PC-9 (cell line): ENCODE measurements at regions of chr15 and their contacts with region 1.

Region 1: GRCh38 chr15:55434989-55435825 is 26.9 kb downstream of the PIERCE2 start:
- DNase-seq: peak; percentile 5 to 37
- H3K4me3 ChIP-seq: no peak overlapping the region
- H3K27ac ChIP-seq: no peak overlapping the region
- H3K4me1 ChIP-seq: no peaks in the 10 kb centered on the region
- H3K27me3 ChIP-seq: no peaks in the 10 kb centered on the region
- CTCF ChIP-seq: peak; percentile 65

Region 2: DNA sequence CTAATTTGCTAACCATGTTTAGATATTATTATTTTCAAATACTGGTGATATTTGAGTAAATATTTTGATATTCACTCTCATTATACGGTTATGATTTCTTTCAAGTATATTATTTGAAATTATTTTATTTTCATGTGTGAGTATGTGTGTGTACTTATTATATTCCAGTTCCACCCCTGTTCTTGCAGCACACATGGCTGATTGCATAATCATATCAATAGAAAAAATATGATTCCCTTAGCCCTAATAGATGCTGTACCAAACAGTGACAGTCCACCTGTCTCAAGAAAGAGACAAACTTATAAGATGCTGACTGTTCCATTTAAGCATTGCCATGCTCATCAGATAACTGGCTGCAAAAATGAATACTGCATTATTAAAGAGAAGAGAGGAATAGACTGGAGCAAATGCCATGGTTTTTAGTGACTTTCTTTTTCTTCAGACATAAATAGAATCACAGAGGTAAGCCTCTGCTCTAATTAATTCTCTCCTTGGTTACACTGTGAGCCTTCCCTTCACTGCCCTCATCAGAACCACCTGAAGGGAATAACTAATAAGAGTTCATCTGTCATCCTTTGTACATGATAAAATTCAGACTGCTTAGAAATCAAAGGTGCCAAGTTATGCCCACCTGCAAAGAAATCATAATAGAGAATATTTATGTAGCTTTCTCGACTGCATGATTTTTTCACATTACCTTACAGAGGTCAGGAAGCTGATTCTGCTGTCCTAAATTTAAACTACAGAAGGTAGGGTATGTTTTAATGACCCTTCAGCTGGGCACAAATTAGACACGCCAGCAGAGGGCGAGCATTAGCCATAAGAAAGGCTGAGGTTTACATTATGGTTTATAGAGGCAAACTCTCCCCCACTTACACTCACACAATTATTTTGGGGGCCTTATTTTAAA is 1472.6 kb before region 1 on chr15:
- CTCF ChIA-PET with region 1: no interaction called
- POLR2A ChIA-PET with region 1: no interaction called
- intact Hi-C with region 1: loop called (anchors 10 kb)
- DNase-seq: peak in 1 of 2 experiments; percentile 7
- H3K4me3 ChIP-seq: no peak overlapping the region
- H3K27ac ChIP-seq: no peak overlapping the region
- H3K4me1 ChIP-seq: no peaks in the 10 kb centered on the region
- H3K27me3 ChIP-seq: no peaks in the 10 kb centered on the region
- CTCF ChIP-seq: peak; percentile 63

Region 3: DNA sequence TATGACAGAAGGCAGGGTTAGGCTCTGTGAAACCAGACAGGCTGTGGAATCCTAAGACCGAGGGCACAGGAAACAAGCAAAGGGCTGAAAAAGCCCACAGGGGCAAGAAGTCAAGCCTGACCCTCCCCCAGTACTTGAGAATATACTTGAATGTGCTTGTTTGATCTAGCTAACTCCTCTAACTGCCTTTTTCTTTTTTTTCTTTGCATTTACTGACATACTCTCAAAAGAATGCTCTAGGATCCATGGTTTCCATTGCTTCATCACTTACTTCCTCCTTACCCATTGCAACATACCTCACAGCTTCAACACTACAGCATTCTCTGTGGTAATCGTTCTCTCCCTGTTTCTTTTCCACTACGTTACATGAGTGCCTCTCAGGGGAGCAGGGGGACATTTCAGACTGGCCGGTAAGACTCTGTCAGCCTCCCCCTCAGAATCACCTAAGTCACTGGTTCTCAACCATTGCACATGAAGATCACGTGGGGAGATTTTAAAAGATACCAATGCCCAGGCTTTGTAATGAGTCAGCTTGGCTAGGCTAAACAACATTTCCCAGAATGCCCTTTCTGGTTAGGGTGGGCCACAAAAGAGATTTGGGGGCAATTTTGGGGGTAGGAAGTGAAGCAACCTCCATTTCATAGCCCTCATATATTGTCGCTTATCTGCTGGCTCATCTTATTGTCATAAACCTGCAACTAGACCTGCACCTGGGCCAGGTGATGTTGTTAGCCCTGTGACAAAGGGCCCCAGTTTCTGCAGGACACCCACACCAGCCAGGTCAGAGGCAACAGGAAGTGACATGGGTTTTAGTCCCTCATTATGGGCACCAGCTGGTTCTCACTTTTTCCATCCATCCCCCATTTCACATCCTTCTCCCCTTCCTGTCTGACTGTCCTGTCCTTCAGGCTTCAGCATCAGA is 213.9 kb before region 1 on chr15:
- CTCF ChIA-PET with region 1: interaction called, 4 read pairs
- POLR2A ChIA-PET with region 1: interaction called, 10 read pairs
- intact Hi-C with region 1: loop called (anchors 1 kb)
- DNase-seq: peak; percentile 33 to 92
- H3K4me3 ChIP-seq: peak overlapping the region; percentile 31; the same call in 1 of the 2 replicates
- H3K27ac ChIP-seq: peak overlapping the region; percentile 84
- H3K4me1 ChIP-seq: peaks cover 23% of the 10 kb centered on the region
- H3K27me3 ChIP-seq: no peaks in the 10 kb centered on the region
- CTCF ChIP-seq: no peak

Region 4: DNA sequence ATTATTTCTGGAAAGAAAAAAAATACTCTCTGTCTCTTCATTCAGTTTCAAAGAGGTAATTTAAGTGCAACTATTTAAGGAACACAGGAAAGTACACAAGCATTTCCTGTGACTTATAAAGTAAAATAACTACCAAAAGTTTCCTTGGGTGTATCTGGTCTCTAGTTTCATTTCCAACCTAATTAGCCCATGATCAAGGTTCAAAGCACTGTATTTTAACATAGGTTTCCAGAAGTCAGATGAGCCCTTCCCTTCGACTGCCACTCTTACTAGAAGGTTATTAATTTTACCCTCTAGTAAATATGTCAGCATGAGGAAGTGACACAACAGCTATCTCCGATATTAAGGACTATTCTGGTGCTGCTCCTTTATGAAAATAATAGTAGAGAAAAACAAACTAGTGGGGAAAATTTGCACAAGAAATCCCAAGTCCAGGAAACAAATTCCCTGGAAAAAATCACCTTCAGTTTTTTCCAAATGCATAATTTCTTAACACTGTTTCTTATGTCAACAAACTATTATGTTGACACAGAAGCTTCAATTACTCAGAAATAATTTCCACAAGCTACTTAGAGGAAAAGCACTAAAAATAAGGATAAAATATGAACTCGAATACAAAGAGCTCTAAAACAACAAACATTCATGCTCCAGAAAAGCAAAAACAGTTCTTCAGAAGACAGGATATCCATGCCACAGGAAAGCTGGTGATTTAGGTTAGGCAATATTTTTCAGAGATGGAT is 62.3 kb before region 1 on chr15:
- CTCF ChIA-PET with region 1: no interaction called
- POLR2A ChIA-PET with region 1: no interaction called
- intact Hi-C with region 1: no loop called
- DNase-seq: no peak
- H3K4me3 ChIP-seq: no peak overlapping the region
- H3K27ac ChIP-seq: no peak overlapping the region
- H3K4me1 ChIP-seq: no peaks in the 10 kb centered on the region
- H3K27me3 ChIP-seq: no peaks in the 10 kb centered on the region
- CTCF ChIP-seq: no peak

Region 5: GRCh38 chr15:55637086-55637485 is 201.9 kb after region 1 on chr15:
- CTCF ChIA-PET with region 1: no interaction called
- POLR2A ChIA-PET with region 1: no interaction called
- intact Hi-C with region 1: loop called (anchors 2 kb)
- DNase-seq: no peak
- H3K4me3 ChIP-seq: no peak overlapping the region
- H3K27ac ChIP-seq: no peak overlapping the region
- H3K4me1 ChIP-seq: no peaks in the 10 kb centered on the region
- H3K27me3 ChIP-seq: no peaks in the 10 kb centered on the region
- CTCF ChIP-seq: no peak